MCF 10A (cell line): ENCODE measurements at regions of chr10 and their contacts with region 1.

Region 1: GRCh38 chr10:126904819-126905686 is at the start of gene DOCK1:
- DNase-seq: peak; percentile 74
- H3K4me3 Mint-ChIP-seq: peak within 1 kb of the TSS; percentile 92
- H3K27ac Mint-ChIP-seq: peak within 1 kb of the TSS; percentile 95
- H3K4me1 Mint-ChIP-seq: peaks cover 42% of the 10 kb centered on the region
- H3K27me3 Mint-ChIP-seq: no peaks in the 10 kb centered on the region
- CTCF ChIP-seq: no peak
- total RNA-seq, gene DOCK1: 40.0 and 42.4 TPM in 2 replicates

Region 2: DNA sequence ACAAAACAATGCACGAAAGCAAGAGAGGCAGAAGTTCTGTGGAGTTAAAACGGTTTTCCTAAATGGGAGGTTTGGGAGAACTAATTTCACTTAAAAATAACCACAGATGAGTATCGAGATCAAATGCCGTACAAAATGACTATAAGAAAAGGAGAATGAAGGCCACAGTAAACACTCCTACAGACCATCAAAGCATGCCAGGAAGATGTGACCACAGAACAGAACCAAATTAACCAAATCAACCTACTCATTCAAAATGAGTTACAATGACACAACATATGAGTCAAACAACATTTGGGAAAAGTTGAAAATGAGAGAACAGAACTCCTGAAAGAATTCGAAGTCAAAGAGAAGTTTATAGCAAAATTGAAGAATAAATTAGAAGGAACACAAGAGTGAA is 24.1 kb before region 1 on chr10:
- CTCF ChIA-PET with region 1: no interaction called
- POLR2A ChIA-PET with region 1: no interaction called
- intact Hi-C with region 1: no loop called
- DNase-seq: no peak
- H3K4me3 Mint-ChIP-seq: no peak overlapping the region
- H3K27ac Mint-ChIP-seq: no peak overlapping the region
- H3K4me1 Mint-ChIP-seq: no peaks in the 10 kb centered on the region
- H3K27me3 Mint-ChIP-seq: no peaks in the 10 kb centered on the region
- CTCF ChIP-seq: no peak

Region 3: GRCh38 chr10:126969310-126969709 is 64.3 kb after region 1 on chr10:
- CTCF ChIA-PET with region 1: no interaction called
- POLR2A ChIA-PET with region 1: no interaction called
- intact Hi-C with region 1: loop called (anchors 2 kb)
- DNase-seq: peak; percentile 40
- H3K4me3 Mint-ChIP-seq: no peak overlapping the region
- H3K27ac Mint-ChIP-seq: no peak overlapping the region
- H3K4me1 Mint-ChIP-seq: peaks cover 9% of the 10 kb centered on the region
- H3K27me3 Mint-ChIP-seq: no peaks in the 10 kb centered on the region
- CTCF ChIP-seq: no peak

Region 4: DNA sequence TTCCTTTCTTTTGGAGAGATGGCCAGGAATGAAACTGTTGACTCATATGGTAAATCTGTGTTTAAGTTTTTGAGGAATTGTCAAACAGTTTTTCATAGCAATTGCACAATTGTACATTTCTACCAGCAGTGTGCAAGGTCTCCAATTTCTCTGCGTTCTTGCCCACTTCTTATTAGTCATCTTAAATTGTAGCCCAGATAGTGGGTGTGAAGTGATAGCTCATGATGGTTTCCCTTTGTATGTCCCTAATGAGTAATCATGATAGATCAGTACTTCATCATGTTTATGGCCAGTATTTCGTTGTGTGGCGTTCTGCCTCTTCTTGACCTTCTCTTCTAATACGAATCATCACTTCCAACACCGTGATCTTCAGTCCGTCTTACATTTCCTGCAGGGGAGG is 136.5 kb after region 1 on chr10:
- CTCF ChIA-PET with region 1: no interaction called
- POLR2A ChIA-PET with region 1: no interaction called
- intact Hi-C with region 1: loop called (anchors 10 kb)
- DNase-seq: peak; percentile 85
- H3K4me3 Mint-ChIP-seq: peak overlapping the region; percentile 6
- H3K27ac Mint-ChIP-seq: peak overlapping the region; percentile 21
- H3K4me1 Mint-ChIP-seq: peaks cover 16% of the 10 kb centered on the region
- H3K27me3 Mint-ChIP-seq: no peaks in the 10 kb centered on the region
- CTCF ChIP-seq: no peak

Region 5: GRCh38 chr10:127150136-127150535 is 245.1 kb after region 1 on chr10:
- CTCF ChIA-PET with region 1: no interaction called
- POLR2A ChIA-PET with region 1: interaction called, 3 read pairs
- intact Hi-C with region 1: loop called (anchors 5 kb)
- DNase-seq: peak; percentile 53
- H3K4me3 Mint-ChIP-seq: no peak overlapping the region
- H3K27ac Mint-ChIP-seq: peak overlapping the region; percentile 52
- H3K4me1 Mint-ChIP-seq: peaks cover 50% of the 10 kb centered on the region
- H3K27me3 Mint-ChIP-seq: no peaks in the 10 kb centered on the region
- CTCF ChIP-seq: no peak